PC-9 (cell line): ENCODE measurements at regions of chr12 and their contacts with region 1.

Region 1: GRCh38 chr12:78898416-78898815 is 33.8 kb downstream of the SYT1 start:
- DNase-seq: no peak
- H3K4me3 ChIP-seq: no peak overlapping the region
- H3K27ac ChIP-seq: no peak overlapping the region
- H3K4me1 ChIP-seq: no peaks in the 10 kb centered on the region
- H3K27me3 ChIP-seq: no peaks in the 10 kb centered on the region
- CTCF ChIP-seq: no peak

Region 2: DNA sequence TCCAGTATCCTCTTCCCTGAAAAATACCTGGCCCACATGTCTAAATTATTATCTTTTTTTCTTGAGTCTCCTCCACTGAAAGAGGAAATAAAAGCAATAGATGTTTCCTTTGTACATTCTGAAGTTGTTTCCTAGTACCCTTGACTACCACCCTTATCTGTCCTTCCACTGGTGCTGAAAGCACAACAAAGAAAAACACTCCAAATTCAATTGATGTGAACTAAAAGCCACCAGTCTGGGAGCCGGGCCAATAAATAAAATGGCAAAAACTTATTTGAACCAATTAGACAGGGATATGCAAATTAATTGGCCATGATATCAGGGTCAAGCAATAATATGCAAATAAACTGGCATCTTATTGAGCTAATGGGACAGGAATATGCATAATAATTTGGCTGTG is 461.9 kb after region 1 on chr12:
- CTCF ChIA-PET with region 1: no interaction called
- POLR2A ChIA-PET with region 1: no interaction called
- intact Hi-C with region 1: loop called (anchors 10 kb)
- DNase-seq: no peak
- H3K4me3 ChIP-seq: no peak overlapping the region
- H3K27ac ChIP-seq: no peak overlapping the region
- H3K4me1 ChIP-seq: 0 out of 2 replicates have a peak, but pooled peaks cover 8% of the 10 kb centered on the region
- H3K27me3 ChIP-seq: no peaks in the 10 kb centered on the region
- CTCF ChIP-seq: no peak